ENCODE measurements at regions of chr5 and their contacts with region 1.

Region 1: GRCh38 chr5:180860887-180861822 is at the start of gene ZFP62:
- DNase-seq: peak; percentile 94 to 98 (median 96)
- ATAC-seq: peak; percentile 99
- H3K4me3 ChIP-seq: peak within 1 kb of the TSS; percentile 72
- H3K27ac ChIP-seq: peak within 1 kb of the TSS; percentile 81
- H3K4me1 ChIP-seq: no peaks in the 10 kb centered on the region
- H3K27me3 ChIP-seq: no peaks in the 10 kb centered on the region
- total RNA-seq, gene ZFP62: 19.7 to 22.8 (median 20.6) TPM

Region 2: GRCh38 chr5:180809403-180810209 is 51.5 kb before region 1 on chr5:
- intact Hi-C with region 1: loop called in 2 of 4 experiments (anchors 10 kb)
- DNase-seq: peak in 2 of 3 donors; percentile 81 to 97
- ATAC-seq: peak; percentile 94 to 95
- H3K4me3 ChIP-seq: peak overlapping the region; percentile 70
- H3K27ac ChIP-seq: peak overlapping the region; percentile 91
- H3K4me1 ChIP-seq: peaks cover 18% of the 10 kb centered on the region
- H3K27me3 ChIP-seq: no peaks in the 10 kb centered on the region

Region 3: DNA sequence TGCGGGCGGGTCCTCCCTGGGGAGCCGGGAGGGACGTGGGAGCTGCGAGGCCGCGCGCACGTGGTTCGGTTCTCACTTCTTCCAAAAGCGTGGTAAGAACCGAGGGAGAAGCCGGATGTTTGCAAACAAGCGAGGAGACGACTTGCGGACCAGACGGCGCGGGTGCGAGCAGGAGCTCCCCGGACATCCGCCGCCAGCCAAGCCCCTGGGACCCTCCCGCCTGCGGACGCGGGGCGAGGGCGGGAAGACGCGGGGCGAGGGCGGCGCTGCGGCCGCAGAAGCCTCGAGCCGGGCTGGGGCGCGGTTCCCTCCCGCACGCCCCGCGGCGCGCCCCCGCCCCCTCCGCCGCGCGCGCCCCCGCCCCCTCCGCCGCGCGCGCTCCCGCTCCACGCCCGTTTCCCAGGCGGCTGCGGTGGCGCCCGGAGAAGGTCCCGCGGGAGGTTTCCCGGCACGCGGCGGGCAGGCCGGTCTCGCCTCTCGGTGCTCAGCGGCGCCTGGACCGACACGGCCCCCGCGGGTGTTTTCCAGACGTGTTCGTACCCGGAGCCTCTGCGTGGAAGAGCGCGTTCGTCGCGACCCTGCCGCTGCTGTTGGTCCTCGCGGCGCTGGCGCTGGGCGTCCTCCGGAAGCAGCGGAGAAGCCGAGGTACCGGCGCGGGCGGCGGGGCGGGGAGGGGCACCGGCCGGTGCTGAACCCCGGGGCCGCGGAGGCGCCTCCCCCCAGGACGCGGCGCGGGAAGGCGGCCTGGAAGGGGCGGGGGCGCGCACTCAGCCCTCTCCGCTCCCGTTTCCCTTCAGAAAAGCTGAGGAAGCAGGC is 191.7 kb after region 1 on chr5:
- intact Hi-C with region 1: loop called in 1 of 4 experiments (anchors 10 kb)
- DNase-seq: peak in 1 of 3 donors; percentile 68
- ATAC-seq: peak; percentile 21 to 28
- H3K4me3 ChIP-seq: peak overlapping the region; percentile 63
- H3K27ac ChIP-seq: peak overlapping the region; percentile 22
- H3K4me1 ChIP-seq: no peaks in the 10 kb centered on the region
- H3K27me3 ChIP-seq: no peaks in the 10 kb centered on the region

Region 4: DNA sequence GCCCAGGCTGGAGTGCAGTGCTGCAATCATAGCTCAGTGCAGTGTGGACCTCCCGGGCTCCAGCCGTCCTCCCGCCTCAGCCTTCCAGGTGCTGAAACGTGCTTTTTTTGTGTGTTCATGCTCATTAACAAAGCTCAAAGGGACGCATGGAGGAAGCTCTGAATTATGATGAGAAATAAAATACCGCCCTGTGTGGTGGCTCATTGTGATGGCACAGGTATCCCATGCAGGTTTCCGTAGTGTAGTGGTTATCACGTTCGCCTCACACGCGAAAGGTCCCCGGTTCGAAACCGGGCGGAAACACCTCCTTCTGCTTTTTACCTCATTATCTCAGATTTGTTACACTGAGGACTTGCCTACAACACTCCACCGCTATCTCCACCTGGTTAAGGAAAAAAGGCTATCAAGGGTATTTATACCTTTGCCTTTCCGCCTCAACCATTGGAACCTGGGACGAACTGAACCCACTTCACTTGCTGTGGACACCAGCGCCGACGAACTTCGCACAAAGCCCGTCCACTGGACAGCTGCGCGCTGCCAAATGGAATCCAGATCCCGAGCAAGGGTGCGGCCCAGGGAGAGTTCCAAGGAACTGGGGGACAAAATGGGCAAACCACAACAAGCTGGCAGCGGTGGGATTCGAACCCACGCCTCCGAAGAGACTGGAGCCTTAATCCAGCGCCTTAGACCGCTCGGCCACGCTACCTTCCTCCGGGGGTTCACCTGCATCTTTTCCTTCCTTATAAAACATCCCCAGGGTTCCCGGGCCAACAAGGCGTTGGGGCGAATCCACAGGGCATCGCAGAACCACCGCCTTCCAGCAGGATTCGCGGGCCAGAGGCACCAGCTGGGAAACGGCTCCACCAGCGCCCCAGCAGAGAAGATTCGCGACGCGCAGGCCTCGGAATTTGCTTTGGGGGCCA is 312.5 kb after region 1 on chr5:
- intact Hi-C with region 1: loop called in 1 of 4 experiments (anchors 10 kb)
- DNase-seq: peak in 1 of 3 donors; percentile 31
- ATAC-seq: no peak
- H3K4me3 ChIP-seq: no peak overlapping the region
- H3K27ac ChIP-seq: no peak overlapping the region
- H3K4me1 ChIP-seq: peaks cover 2% of the 10 kb centered on the region
- H3K27me3 ChIP-seq: peaks cover 2% of the 10 kb centered on the region